Panc1 (cell line): ENCODE measurements at regions of chr4 and their contacts with region 1.

Region 1: GRCh38 chr4:2842687-2843262 is 869 bp upstream of the ADD1 start:
- DNase-seq: no peak
- ATAC-seq: no peak; the same call in 1 of the 2 replicates
- H3K4me3 ChIP-seq: peak overlapping the region; percentile 48 to 75
- H3K27ac ChIP-seq: peak overlapping the region; percentile 80
- H3K4me1 ChIP-seq: peaks cover 6% of the 10 kb centered on the region; the same call in 1 of the 2 replicates
- H3K27me3 ChIP-seq: no peaks in the 10 kb centered on the region
- CTCF ChIP-seq: no peak

Region 2: DNA sequence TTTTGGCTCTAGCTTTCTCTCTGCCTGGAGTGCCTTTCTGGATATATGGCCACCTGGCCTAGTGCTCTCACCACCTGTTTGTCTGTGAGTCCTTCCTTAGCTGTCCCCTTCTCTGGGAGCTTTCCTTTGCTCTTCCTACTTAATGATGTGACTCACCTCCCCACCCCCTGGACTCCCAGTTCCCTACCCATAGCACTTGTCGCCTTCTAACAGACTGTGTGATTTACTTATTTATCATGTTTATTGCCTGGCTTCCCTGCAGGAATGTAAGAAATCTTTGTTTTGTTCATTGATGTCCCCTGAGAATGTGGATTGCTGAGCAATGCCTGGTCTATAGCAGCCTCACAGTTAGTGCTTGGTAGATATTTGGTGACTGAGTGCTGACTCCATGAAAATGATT is 19.8 kb after region 1 on chr4:
- CTCF ChIA-PET with region 1: interaction called, 13 read pairs
- POLR2A ChIA-PET with region 1: no interaction called
- in situ Hi-C with region 1: no loop called
- intact Hi-C with region 1: no loop called
- DNase-seq: no peak
- ATAC-seq: peak; percentile 62
- H3K4me3 ChIP-seq: no peak overlapping the region
- H3K27ac ChIP-seq: no peak overlapping the region
- H3K4me1 ChIP-seq: peaks cover 38% of the 10 kb centered on the region
- H3K27me3 ChIP-seq: no peaks in the 10 kb centered on the region
- CTCF ChIP-seq: no peak

Region 3: GRCh38 chr4:2878346-2878745 is 35.6 kb after region 1 on chr4:
- CTCF ChIA-PET with region 1: no interaction called
- POLR2A ChIA-PET with region 1: no interaction called
- in situ Hi-C with region 1: no loop called
- intact Hi-C with region 1: no loop called
- DNase-seq: no peak
- ATAC-seq: no peak
- H3K4me3 ChIP-seq: no peak overlapping the region
- H3K27ac ChIP-seq: no peak overlapping the region
- H3K4me1 ChIP-seq: no peaks in the 10 kb centered on the region
- H3K27me3 ChIP-seq: no peaks in the 10 kb centered on the region
- CTCF ChIP-seq: no peak

Region 4: GRCh38 chr4:2981256-2981819 is 138.6 kb after region 1 on chr4:
- CTCF ChIA-PET with region 1: no interaction called
- POLR2A ChIA-PET with region 1: no interaction called
- in situ Hi-C with region 1: no loop called
- intact Hi-C with region 1: no loop called
- DNase-seq: no peak
- ATAC-seq: no peak
- H3K4me3 ChIP-seq: no peak overlapping the region
- H3K27ac ChIP-seq: no peak overlapping the region
- H3K4me1 ChIP-seq: no peaks in the 10 kb centered on the region
- H3K27me3 ChIP-seq: no peaks in the 10 kb centered on the region
- CTCF ChIP-seq: no peak